ENCODE measurements at regions of chr14 and their contacts with region 1.

Region 1: GRCh38 chr14:53109105-53110041 is 43.8 kb downstream of the DDHD1 start:
- DNase-seq: peak; percentile 43
- H3K4me3 ChIP-seq: peak overlapping the region; percentile 53
- H3K27ac ChIP-seq: peak overlapping the region; percentile 69
- H3K4me1 ChIP-seq: peaks cover 25% of the 10 kb centered on the region
- CTCF ChIP-seq: no peak

Region 2: GRCh38 chr14:53040893-53041466 is 68.4 kb before region 1 on chr14:
- CTCF ChIA-PET with region 1: no interaction called
- POLR2A ChIA-PET with region 1: no interaction called
- intact Hi-C with region 1: no loop called
- DNase-seq: no peak
- H3K4me3 ChIP-seq: no peak overlapping the region
- H3K27ac ChIP-seq: no peak overlapping the region
- H3K4me1 ChIP-seq: no peaks in the 10 kb centered on the region
- CTCF ChIP-seq: no peak

Region 3: DNA sequence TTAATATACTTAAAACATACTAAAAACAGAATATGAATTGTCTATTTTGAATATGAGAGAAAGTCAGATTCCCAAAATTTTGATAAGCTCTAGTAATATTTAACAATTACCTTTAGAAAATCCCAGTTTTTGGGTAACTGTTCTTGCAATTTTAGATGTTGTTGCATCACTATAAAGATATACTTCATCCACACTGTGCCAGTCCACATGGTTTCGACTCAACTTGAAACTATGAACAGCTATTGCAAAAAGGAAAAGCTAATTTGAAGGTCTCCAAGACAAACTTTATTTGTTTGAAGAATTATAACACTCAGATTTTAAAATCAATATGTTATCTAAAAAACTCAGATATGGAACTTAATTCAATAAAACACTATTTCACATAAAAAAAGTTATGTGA is 16.2 kb before region 1 on chr14:
- CTCF ChIA-PET with region 1: no interaction called
- POLR2A ChIA-PET with region 1: interaction called, 10 read pairs
- intact Hi-C with region 1: no loop called
- DNase-seq: no peak
- H3K4me3 ChIP-seq: no peak overlapping the region
- H3K27ac ChIP-seq: no peak overlapping the region
- H3K4me1 ChIP-seq: no peaks in the 10 kb centered on the region
- CTCF ChIP-seq: no peak

Region 4: DNA sequence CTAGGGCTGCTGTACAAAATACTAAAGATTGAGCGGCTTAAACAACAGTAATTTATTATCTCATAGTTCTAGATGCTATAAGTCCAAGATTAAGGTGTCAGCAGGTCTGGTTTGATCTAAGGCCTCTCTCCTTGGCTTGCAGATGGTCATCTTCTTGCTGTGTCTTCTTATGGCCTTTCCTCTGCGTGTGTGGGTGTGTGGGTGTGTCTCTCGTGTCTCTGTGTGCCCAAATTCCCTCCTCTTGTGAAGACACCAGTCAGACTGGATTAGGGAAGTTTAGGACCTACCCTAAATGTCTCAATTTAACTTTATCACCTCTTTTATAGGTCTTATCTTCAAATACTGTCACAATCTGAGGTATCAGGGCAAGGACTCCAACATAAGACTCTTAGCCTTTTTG is 15.4 kb after region 1 on chr14:
- CTCF ChIA-PET with region 1: no interaction called
- POLR2A ChIA-PET with region 1: interaction called, 15 read pairs
- intact Hi-C with region 1: no loop called
- DNase-seq: no peak
- H3K4me3 ChIP-seq: no peak overlapping the region
- H3K27ac ChIP-seq: no peak overlapping the region
- H3K4me1 ChIP-seq: peaks cover 17% of the 10 kb centered on the region
- CTCF ChIP-seq: no peak